MCF 10A (cell line): ENCODE measurements at regions of chr5 and their contacts with region 1.

Region 1: DNA sequence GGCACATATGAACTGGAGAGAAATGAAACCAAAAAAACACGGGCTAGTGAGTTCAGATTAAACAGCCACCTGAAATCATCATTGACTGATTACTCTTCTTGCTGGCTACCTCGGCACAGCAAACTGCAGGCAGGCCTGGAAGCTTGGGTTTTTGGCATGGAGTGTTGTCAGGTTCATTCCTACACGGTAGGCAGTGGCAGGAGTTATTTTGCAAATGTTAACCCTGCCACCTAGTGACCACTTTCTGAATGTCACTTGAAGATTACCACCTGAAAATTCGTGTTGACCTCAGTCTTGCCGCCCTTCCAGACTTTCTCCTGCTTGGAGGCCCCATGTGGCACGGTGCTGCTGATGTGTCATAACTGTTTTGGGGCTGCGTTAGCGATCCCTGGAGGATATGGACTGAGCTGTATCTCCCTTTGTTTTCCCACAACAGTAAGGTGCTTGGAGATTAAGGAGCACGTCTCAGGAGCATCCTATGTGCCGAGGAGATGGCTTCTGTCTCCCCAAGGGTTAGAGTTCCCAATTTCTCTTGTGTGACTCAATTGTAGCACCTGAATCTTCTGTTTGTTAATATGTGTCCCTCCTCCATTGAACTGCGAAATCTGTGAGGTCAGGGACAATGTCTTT is 12.7 kb upstream of the CD180 start:
- DNase-seq: peak; percentile 88
- H3K4me3 Mint-ChIP-seq: no peak overlapping the region
- H3K27ac Mint-ChIP-seq: no peak overlapping the region
- H3K4me1 Mint-ChIP-seq: peaks cover 48% of the 10 kb centered on the region
- H3K27me3 Mint-ChIP-seq: no peaks in the 10 kb centered on the region
- CTCF ChIP-seq: peak; percentile 69

Region 2: GRCh38 chr5:66807743-66808142 is 401.5 kb before region 1 on chr5:
- CTCF ChIA-PET with region 1: interaction called, 3 read pairs
- POLR2A ChIA-PET with region 1: no interaction called
- intact Hi-C with region 1: loop called (anchors 2 kb)
- DNase-seq: peak; percentile 84
- H3K4me3 Mint-ChIP-seq: no peak overlapping the region
- H3K27ac Mint-ChIP-seq: no peak overlapping the region
- H3K4me1 Mint-ChIP-seq: peaks cover 8% of the 10 kb centered on the region
- H3K27me3 Mint-ChIP-seq: peaks cover 42% of the 10 kb centered on the region
- CTCF ChIP-seq: peak; percentile 56

Region 3: GRCh38 chr5:66814146-66814991 is 394.9 kb before region 1 on chr5:
- CTCF ChIA-PET with region 1: interaction called, 5 read pairs
- POLR2A ChIA-PET with region 1: no interaction called
- intact Hi-C with region 1: loop called (anchors 1 kb)
- DNase-seq: peak; percentile 69
- H3K4me3 Mint-ChIP-seq: no peak overlapping the region
- H3K27ac Mint-ChIP-seq: no peak overlapping the region
- H3K4me1 Mint-ChIP-seq: peaks cover 6% of the 10 kb centered on the region
- H3K27me3 Mint-ChIP-seq: no peaks in the 10 kb centered on the region
- CTCF ChIP-seq: peak; percentile 41

Region 4: DNA sequence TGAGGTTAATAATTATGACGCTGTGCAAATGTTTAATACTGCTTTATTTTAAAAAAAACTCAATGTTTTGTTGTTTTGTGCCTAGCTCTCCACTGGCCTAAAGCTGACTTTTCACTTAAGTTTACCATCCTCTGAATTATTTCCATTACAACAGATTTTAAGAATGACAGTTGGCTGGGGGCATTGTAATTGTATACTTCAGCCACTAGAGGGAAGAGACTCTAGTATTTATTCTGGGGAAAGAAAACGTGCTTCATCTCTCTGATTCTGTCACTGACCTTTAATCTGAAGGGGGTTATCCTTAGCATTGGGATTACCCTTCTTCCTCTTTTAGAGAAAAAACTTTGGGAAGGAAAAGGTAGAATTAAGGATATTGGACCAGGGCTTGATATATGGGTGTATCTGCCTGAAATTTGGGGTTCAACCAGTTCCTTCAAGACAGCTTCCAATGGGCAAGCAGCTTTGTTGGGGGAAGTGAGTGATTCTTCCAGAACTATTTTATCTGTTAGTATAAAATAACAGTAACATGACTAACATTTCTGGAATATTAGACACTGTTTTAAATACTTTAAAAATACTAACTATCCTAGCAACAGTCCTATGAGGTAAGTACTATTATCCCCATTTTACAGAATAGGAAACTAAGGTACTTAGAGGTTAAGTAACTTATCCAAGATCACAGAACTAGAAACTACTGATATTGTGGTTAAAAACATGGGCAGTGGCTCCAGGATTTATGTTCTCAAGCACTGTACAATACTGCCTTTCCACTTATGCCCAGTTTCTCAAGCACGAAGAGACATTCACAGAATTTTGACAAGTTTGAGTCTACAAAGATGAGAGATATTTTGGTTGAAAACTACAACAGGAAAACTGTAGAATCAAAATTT is 221.1 kb before region 1 on chr5:
- CTCF ChIA-PET with region 1: no interaction called
- POLR2A ChIA-PET with region 1: no interaction called
- intact Hi-C with region 1: loop called (anchors 1 kb)
- DNase-seq: peak; percentile 48
- H3K4me3 Mint-ChIP-seq: no peak overlapping the region
- H3K27ac Mint-ChIP-seq: no peak overlapping the region
- H3K4me1 Mint-ChIP-seq: peaks cover 5% of the 10 kb centered on the region
- H3K27me3 Mint-ChIP-seq: no peaks in the 10 kb centered on the region
- CTCF ChIP-seq: peak; percentile 54

Region 5: GRCh38 chr5:67156976-67157583 is 52.2 kb before region 1 on chr5:
- CTCF ChIA-PET with region 1: interaction called, 220 read pairs
- POLR2A ChIA-PET with region 1: interaction called, 63 read pairs
- intact Hi-C with region 1: loop called (anchors 1 kb)
- DNase-seq: peak; percentile 52
- H3K4me3 Mint-ChIP-seq: no peak overlapping the region
- H3K27ac Mint-ChIP-seq: no peak overlapping the region
- H3K4me1 Mint-ChIP-seq: peaks cover 18% of the 10 kb centered on the region
- H3K27me3 Mint-ChIP-seq: no peaks in the 10 kb centered on the region
- CTCF ChIP-seq: peak; percentile 81

Region 6: GRCh38 chr5:67165526-67166459 is 43.5 kb before region 1 on chr5:
- CTCF ChIA-PET with region 1: interaction called, 220 read pairs
- POLR2A ChIA-PET with region 1: interaction called, 63 read pairs
- intact Hi-C with region 1: loop called (anchors 1 kb)
- DNase-seq: peak; percentile 87
- H3K4me3 Mint-ChIP-seq: no peak overlapping the region
- H3K27ac Mint-ChIP-seq: peak overlapping the region; percentile 75
- H3K4me1 Mint-ChIP-seq: peaks cover 9% of the 10 kb centered on the region
- H3K27me3 Mint-ChIP-seq: no peaks in the 10 kb centered on the region
- CTCF ChIP-seq: peak; percentile 66

Region 7: GRCh38 chr5:67221487-67222242 is 12.4 kb after region 1 on chr5:
- CTCF ChIA-PET with region 1: interaction called, 12 read pairs
- POLR2A ChIA-PET with region 1: no interaction called
- intact Hi-C with region 1: no loop called
- DNase-seq: no peak
- H3K4me3 Mint-ChIP-seq: no peak overlapping the region
- H3K27ac Mint-ChIP-seq: no peak overlapping the region
- H3K4me1 Mint-ChIP-seq: no peaks in the 10 kb centered on the region
- H3K27me3 Mint-ChIP-seq: no peaks in the 10 kb centered on the region
- CTCF ChIP-seq: no peak

Region 8: DNA sequence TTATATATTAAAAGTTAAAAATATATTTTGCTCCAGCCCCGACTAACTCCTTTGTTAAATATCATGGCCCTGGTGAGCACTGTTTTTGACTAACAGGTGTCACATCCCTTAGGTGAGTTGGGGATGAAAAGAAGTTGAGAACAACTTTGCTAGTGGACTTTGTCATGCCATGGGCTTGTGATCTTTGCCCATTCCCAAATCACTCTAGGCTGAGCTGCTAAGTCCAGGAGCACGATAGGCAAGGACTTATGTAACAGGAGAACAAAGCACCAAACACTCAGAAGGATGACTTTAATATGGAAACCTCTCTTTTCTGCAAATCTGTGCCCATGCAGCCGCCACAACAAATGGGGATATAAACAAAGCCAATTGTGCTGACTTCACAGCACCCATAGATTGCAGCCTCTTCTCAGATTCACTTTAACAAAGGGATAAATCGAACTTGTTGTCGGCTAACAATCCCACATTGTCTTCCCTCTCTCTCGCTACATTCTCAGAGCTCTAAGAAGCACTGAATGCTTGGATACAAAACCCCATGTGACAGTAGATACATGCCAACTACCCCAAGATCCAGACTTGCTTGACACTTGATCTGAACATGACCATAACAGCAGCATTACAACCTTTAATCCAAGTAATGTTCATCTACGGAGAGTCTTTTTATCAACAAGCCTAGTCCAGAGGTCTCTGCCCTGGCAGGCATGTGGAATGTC is 74.2 kb after region 1 on chr5:
- CTCF ChIA-PET with region 1: no interaction called
- POLR2A ChIA-PET with region 1: no interaction called
- intact Hi-C with region 1: no loop called
- DNase-seq: no peak
- H3K4me3 Mint-ChIP-seq: no peak overlapping the region
- H3K27ac Mint-ChIP-seq: peak overlapping the region; percentile 24
- H3K4me1 Mint-ChIP-seq: peaks cover 21% of the 10 kb centered on the region
- H3K27me3 Mint-ChIP-seq: no peaks in the 10 kb centered on the region
- CTCF ChIP-seq: no peak